ENCODE measurements at regions of chr13 and their contacts with region 1.

Region 1: DNA sequence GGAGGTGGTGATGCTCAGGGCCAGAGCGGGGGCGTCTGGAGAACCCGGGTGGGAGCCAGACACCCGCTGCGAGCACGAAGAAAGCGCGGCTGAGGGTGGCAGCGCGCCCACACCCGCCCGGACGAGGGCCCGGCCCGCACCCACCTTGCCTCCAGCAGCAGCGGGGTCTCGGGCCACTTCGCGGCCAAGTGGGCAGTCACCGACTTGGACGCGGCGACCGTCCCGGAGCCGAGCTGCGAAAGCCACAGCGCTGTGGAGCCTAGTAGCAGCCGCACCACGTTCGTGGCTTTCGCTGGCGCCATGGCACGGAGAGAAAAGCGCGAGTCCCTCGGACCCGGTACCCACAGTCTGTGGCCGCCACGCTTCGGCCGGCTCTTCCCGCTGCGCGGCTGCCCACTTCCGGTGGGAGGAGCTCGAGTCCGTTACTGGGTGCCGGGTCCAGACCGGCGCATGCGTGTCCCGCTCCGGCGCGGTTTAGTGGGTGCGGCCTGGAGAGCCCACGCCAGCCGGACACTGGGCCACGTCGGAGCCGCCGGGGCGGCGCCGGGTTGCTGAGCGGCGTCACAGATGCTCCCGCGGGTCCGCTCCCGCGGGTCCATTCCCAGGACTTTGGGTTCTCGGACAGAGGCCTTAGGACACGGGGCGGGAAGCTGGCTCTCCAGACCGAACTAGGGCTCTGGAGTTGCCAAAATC is at the start of gene UGGT2:
- DNase-seq: peak; percentile 95

Region 2: DNA sequence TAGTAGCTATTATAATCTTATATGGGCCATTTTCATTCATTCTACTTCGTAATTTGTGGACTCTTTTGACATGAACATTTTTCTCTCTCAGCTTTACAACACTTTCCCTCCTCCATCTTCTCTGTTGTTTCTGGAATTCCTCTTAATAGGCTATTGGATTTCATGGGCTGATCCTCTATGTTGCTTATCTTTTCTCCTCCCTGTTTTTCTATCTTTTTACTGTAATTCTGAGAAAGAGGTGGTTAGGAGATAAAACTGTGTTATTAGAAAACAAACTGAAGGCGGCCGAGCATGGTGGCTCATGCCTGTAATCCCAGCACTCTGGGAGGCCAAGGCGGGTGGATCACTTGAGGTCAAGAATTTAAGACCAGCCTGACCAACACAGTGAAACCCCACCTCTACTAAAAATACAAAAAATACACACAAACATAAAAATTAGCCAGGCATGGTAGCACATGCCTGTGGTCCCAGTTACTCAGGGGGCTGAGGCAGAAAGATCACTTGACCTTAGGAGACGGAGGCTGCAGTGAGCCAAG is 188.0 kb before region 1 on chr13:
- CTCF ChIA-PET with region 1: no interaction called
- POLR2A ChIA-PET with region 1: no interaction called
- DNase-seq: no peak

Region 3: GRCh38 chr13:96041326-96042110 is 11.6 kb before region 1 on chr13:
- CTCF ChIA-PET with region 1: no interaction called
- POLR2A ChIA-PET with region 1: interaction called, 16 read pairs
- DNase-seq: no peak

Region 4: GRCh38 chr13:96089749-96090239 is 36.6 kb after region 1 on chr13 and contains the start of gene HS6ST3:
- CTCF ChIA-PET with region 1: no interaction called
- POLR2A ChIA-PET with region 1: interaction called, 16 read pairs
- DNase-seq: peak; percentile 71

Measured in HEK293T (cell line).